Left cardiac atrium (tissue), 4 donors: ENCODE measurements at regions of chr10 and their contacts with region 1.

Region 1: DNA sequence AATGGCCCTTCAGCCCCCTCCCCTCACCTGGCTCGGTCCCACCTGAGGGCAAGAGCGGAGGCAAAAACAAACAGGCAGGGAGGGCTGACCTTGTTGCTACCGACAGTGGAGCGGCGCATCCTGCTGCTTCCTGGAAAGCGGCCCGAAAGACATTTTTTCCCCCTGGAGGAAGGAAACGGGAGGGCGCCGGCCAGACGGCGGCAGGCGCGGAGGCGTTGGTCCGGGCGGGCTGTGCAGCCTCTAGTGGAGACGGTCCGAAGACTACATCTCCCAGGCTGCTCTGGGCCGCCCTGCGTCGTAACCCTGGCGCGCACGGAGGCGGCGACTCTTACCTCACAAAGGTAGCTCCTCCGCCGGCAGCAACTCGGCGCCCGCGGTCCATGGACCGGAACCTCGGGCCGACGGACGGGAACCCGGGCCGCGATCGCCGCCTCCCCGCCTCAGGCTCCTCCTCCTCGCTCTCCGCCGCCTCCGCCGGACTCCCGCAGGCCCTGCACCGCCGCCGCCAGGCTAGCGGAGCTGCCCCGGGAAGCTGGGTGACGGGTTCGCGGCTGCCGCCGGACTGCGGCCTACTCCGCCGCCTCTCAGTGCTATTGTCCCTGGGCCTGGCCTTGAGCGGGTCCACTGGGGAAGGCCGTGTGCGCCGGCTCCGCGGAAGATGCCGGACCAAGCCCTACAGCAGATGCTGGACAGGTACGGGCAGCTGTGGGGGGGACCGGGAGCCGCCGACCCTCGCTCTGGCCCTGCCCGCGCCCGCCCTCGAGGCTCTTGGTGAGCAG is at the starts of genes CPEB3 and MARCHF5:
- DNase-seq: peak; percentile 98
- ATAC-seq: peak; percentile 99
- total RNA-seq, gene CPEB3: 7.4 to 11.4 TPM
- total RNA-seq, gene MARCHF5: 27.6 to 34.3 TPM

Region 2: DNA sequence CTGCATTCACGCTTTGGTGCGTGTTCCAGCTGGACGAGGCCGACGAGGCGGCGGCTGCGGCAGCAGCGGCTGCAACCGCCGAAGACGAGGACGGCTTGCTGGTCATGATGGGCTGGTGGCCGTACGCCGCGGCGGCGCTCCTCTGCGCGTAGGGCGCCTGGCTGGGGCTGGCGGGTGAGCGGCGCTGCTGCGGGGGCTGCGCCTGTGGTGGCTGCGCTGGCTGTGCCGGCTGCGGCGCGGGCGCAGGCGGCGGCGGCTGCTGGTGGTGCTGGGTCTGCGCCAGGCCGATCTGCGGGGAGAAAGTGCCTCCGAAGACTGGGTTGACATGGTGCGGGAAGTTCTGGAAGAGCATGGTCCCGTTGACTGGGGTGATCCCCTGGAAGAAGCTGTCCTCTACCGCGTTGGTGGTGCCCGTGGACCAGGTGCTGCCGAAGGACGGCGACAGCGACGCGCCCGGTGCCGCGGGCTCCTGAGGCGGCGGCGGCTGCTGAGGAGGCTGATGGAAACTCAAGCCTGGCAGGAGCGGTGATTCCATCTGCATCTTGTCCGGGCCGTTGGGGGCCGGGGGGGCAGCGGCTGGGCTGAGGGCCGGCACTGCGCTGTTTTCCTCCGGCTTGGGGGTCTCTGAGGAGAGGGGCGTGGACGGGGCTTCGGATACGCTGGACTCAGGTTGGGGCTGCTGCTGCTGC is 51.3 kb before region 1 on chr10:
- intact Hi-C with region 1: loop called in 1 of 2 experiments (anchors 1 kb)
- DNase-seq: peak; percentile 51
- ATAC-seq: peak; percentile 63 to 69

Region 3: DNA sequence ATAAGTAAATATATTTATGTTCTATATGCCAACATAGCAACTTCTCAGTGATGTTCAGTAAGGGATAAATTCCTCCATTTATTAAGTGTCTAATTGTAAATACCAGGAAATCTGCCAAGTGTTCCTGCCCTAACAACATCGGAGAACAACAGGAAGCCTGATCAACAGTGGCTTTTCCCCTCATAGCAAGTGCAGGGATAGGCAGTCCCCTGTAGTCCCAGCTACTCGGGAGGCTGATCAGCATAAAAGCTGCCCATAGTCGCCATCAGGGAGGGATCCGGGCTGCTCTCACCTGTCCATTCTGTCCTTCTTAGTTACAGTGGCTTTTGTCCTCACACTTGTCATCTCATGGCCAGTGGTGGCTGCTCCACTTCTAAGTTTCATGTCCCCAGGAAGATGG is 141.6 kb after region 1 on chr10:
- intact Hi-C with region 1: loop called in 1 of 2 experiments (anchors 10 kb)
- DNase-seq: no peak
- ATAC-seq: no peak

Region 4: GRCh38 chr10:92470041-92470440 is 179.0 kb after region 1 on chr10:
- intact Hi-C with region 1: no loop called
- DNase-seq: no peak
- ATAC-seq: no peak